ENCODE measurements at regions of chr14 and their contacts with region 1.

Region 1: GRCh38 chr14:50773632-50774541 is 57.1 kb downstream of the NIN start:
- DNase-seq: no peak
- CTCF ChIP-seq: peak; percentile 77

Region 2: GRCh38 chr14:50599700-50600444 is 174.0 kb before region 1 on chr14:
- CTCF ChIA-PET with region 1: interaction called, 30 read pairs
- POLR2A ChIA-PET with region 1: no interaction called
- DNase-seq: peak; percentile 17
- CTCF ChIP-seq: peak; percentile 54

Region 3: DNA sequence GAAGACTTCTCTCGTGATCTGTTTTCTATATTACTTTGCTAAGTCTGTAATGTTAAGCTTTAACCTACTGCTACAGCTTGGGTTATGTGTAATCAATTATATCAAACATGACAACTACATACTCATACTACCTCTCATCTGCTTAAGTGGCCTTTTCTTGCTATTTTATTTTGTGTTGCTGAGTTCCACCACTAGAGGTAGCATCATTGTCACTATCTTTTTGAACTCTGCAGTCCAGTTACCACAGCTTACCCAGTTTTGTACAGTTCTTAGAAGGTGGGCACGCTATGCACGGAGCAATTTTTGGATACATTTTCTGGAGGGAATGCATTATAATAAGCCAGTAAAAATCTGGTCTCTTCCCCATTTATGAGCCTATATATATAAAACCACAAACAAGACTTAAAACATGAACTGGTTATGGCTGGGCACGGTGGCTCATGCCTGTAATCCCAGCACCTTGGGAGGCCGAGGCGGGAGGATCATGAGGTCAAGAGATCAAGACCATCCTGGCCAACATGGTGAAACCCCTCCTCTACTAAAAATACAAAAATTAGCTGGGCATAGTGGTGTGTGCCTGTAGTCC is 154.2 kb before region 1 on chr14:
- CTCF ChIA-PET with region 1: interaction called, 35 read pairs
- POLR2A ChIA-PET with region 1: no interaction called
- DNase-seq: peak; percentile 39
- CTCF ChIP-seq: peak; percentile 57

Region 4: DNA sequence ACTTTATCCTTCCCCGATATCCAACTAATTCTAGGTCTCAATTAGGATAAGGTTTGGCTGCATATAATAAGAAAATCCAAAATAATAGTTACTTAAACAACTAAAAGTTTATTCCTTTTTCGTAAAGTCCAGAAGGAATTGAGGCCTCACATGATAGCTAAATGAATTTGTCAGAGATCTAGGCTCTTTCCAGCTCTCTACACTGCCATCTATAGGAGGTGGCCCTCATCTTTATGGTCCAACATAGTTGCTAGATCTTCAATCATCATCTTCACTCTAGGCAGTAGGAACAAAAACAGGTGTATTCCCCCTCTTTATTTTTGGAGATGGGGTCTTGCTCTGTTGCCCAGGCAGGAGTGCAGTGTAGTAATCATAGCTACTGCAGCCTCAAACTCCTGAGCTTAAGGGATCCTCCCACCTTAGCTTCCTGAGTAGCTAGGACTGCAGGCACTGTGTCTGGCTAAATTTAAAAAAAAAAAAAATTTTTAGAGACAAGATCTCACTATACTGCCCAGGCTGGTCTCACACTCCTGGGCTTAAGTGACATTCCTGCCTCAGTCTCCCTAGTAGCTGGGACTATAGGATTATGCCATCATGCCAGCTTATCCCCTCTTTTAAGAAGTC is 59.3 kb before region 1 on chr14:
- CTCF ChIA-PET with region 1: interaction called, 15 read pairs
- POLR2A ChIA-PET with region 1: no interaction called
- DNase-seq: peak; percentile 59
- CTCF ChIP-seq: peak; percentile 59

Region 5: DNA sequence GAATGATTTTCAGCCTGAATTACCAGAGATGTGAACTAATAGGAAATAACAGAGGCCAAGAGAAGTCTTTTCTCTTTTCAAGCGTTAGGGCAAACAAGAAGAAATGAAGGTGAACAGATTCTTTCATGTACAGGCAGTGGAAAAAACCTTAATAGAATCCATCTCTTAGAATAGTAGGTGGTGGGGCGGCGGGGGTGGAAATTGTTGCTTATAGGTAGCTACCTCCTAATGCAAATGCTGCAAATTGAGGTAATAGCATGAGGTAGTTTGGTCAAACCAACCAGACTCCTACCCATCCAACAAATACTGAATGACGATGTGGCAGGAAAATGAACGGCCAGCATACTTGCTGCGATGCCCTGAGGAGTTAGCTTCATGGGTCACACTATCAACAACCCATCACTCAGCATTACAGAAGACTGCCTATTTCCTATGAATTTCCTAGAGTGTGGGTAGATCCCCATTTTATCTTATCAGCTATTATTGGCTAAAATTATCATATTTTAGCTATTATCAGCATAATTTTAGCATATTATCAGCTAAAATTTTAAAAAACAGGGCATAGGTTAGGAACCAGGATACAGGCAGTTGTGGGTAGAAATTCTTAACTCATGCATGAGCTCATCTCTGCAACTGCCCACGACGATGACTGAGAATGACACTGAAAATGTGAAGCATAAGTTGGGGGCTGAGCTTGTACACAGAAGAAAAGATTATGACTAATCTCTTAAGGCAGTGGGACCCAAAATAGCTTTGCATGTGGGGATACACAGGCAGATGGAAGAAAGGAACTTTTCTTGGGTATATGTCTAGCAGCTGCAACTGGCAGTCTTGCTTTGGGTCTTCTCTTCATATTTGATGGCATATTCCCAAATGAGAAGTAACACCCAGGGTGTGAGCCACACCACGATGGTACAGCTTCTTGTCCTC is 11.6 kb before region 1 on chr14:
- CTCF ChIA-PET with region 1: interaction called, 217 read pairs
- POLR2A ChIA-PET with region 1: no interaction called
- DNase-seq: peak; percentile 69
- CTCF ChIP-seq: no peak

Region 6: GRCh38 chr14:50804181-50804721 is 30.4 kb after region 1 on chr14:
- CTCF ChIA-PET with region 1: interaction called, 21 read pairs
- POLR2A ChIA-PET with region 1: no interaction called
- DNase-seq: no peak
- CTCF ChIP-seq: no peak

Region 7: DNA sequence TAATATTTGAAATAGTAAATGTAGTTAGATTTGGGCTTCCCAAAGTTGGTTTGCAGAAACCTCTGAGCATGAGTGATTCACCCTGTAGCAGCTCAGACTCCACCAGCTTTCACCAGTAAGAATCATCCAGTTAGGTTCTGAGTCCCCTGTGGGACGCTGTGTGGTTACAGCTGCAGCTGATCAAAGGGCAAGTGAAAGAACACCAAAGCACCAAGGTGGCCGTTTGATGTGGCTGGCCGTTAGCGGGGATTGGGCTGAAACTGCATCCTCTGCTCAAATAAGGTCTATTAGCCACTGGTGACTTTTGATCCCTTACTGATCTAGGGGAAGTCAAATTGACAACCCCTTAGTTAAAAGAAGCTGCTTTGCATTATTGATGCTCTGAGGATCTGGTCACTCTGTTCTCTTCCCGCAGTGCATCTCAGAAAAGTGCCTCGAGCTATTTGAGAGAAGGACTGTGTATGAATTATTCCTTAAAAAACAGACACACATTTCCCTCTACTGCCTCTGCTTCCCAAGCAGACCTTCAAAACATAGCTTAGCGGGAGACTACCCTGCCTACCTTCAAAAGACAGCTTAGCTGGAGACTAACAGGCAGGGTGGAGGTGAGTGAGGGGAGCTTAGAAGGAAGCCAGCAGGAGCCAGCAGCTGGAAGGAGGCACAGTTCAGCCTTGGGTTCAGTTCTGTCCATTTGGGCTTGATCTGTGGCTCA is 101.6 kb after region 1 on chr14:
- CTCF ChIA-PET with region 1: no interaction called
- POLR2A ChIA-PET with region 1: no interaction called
- DNase-seq: peak; percentile 78
- CTCF ChIP-seq: no peak

Region 8: DNA sequence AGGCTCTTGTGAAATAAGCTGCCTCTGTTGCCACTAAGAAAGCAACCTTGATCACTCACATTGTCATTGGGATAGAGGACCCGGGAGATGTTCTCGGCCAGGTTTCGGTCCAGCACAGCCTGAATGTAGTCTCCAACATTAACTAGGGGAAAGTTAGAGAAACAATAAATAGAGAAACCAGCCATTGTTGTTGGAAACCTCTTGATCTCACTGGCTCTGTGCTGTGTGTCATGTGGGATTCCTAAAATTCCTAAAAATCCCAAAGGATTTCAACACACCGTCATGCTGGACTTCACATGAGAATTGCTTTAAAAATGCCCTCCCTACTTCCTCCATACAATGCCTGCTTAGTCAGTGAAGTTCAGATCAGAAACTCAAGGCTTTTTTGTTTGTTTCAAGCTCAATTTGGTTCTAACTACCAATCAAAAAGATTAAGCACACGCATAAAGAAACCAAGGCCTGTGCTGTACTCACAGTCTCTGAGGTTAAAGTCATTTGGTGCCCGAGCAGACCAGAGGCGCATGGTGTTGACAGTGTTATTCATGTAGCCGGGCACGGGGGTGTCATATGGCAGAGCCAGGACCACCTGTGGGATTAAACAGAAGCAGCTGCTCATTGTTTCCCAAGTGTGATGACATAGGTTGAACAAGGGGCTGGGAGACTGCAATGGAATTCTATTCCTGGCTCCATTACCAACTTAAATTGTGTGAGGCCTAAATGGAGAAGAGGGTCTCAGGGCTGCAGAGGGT is 146.8 kb after region 1 on chr14:
- CTCF ChIA-PET with region 1: no interaction called
- POLR2A ChIA-PET with region 1: no interaction called
- DNase-seq: no peak
- CTCF ChIP-seq: no peak

Measured in GM10248 (cell line).